H1 (cell line): ENCODE measurements at regions of chr6 and their contacts with region 1.

Region 1: DNA sequence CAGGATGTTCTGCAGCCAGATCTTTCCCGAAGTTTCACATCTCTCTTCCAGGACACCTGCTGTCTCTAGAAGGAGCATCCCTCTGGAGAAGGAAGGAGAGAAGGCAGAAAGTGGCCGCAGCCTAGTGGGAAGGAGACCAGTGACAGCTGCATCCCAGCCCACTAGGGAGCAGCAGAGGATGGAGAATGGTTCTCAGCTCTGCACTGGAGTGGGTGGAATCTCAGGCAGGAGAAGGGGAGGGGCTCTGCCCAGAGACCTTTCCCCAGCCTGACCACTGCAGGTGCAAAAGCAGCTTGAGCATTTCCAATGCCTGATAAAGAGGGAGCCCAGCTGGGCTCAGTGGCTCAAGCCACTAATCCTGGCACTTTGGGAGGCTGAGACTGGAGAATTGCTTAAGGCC is 32.3 kb downstream of the NCR2 start:
- DNase-seq: peak in 1 of 2 experiments; percentile 79
- H3K4me3 ChIP-seq: no peak overlapping the region
- H3K27ac ChIP-seq: no peak overlapping the region
- H3K4me1 ChIP-seq: peaks cover 3 to 22% (median 11%) of the 10 kb centered on the region in 4 experiments
- H3K27me3 ChIP-seq: peaks cover 31 to 38% (median 38%) of the 10 kb centered on the region in 4 experiments
- CTCF ChIP-seq: peak in 2 of 3 experiments; percentile 97; a peak in 3 of 4 replicates
- EP300 ChIP-seq: no peak
- POLR2A ChIP-seq: no peak
- RAD21 ChIP-seq: peak; percentile 98 to 99

Region 2: GRCh38 chr6:41356790-41357189 is 10.9 kb before region 1 on chr6:
- CTCF ChIA-PET with region 1: interaction called, 12 read pairs
- POLR2A ChIA-PET with region 1: no interaction called
- DNase-seq: peak in 1 of 2 experiments; percentile 30
- H3K4me3 ChIP-seq: no peak overlapping the region
- H3K27ac ChIP-seq: no peak overlapping the region
- H3K4me1 ChIP-seq: no peaks in the 10 kb centered on the region; a peak in 2 of 7 replicates
- H3K27me3 ChIP-seq: no peaks in the 10 kb centered on the region; a peak in 1 of 7 replicates
- CTCF ChIP-seq: peak in 1 of 3 experiments; percentile 7; a peak in 1 of 4 replicates
- EP300 ChIP-seq: no peak
- POLR2A ChIP-seq: no peak
- RAD21 ChIP-seq: no peak

Region 3: DNA sequence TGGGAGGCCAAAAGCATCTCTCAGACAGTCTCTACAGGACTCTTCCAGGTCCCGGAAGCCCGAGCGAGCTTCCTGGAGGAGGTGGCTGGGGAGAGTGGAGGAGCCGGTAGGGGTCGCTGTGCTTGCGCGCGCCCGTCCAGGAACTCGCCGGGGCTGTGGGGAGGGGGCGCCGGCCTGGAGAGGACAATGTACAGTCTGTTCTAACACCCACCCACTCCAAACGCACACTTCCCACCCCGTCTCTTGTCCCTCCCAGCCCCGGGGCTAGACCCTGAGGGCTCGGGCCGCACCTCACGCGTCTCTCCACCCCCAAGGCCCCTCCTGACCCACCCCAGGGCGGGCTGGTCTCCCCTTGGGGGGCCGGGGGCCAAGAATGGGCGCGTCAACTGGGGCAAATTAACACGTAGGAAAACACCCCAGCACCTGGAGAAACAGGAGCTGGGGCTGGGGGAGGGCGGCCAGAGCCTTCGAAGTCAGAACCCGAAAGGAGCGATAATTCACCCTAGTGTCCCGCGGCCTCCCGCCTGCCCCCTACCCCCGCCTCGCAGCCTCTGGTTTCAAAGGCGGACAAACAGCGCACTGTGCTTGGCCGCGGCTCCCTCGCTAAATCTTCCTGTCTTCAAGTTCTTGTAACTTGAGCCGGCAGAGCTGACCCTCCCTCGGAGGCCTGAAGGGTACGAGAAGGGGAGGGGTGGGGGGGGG is 75.3 kb after region 1 on chr6:
- CTCF ChIA-PET with region 1: interaction called, 26 read pairs
- POLR2A ChIA-PET with region 1: interaction called, 6 read pairs
- DNase-seq: peak; percentile 71 to 93
- H3K4me3 ChIP-seq: peak overlapping the region; percentile 43 to 76 (median 51)
- H3K27ac ChIP-seq: peak overlapping the region; percentile 10; the same call in 1 of the 2 replicates
- H3K4me1 ChIP-seq: peaks cover 10 to 24% (median 14%) of the 10 kb centered on the region in 4 experiments
- H3K27me3 ChIP-seq: peaks cover 1 to 21% (median 13%) of the 10 kb centered on the region in 4 experiments
- CTCF ChIP-seq: peak; percentile 80 to 87 (median 83)
- EP300 ChIP-seq: no peak
- POLR2A ChIP-seq: no peak; a peak in 1 of 3 replicates
- RAD21 ChIP-seq: peak; percentile 67 to 78

Region 4: DNA sequence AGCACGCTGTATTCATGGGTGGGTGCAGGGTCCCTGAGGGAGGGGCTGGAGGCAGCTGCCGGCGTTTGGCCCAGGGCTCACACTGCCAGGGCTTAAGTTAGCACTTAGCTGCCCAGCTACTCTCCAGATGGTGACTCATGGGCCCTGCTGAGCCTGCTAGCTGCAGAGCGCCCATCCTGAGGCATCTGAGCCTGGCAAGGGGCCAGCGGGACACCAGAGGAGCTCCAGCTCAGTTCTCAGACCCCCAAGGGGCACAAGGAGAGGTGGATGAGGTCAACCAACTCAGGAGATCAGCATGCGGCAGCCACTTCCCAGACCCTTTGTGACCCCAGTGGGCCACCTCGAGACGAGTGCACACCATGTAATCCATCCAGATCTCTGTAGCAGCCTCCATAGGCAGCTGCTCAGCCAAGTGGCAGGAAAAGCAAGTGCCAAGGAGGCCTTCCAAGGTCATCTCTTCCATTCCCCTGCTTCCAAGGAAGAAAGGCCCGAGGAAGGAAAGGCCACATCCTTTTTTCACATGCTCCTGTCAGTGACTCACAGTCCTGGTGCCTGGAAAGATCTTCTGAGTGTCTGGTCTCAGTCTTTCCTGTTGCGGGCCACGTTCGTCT is 213.8 kb after region 1 on chr6:
- CTCF ChIA-PET with region 1: interaction called, 28 read pairs
- POLR2A ChIA-PET with region 1: no interaction called
- DNase-seq: no peak
- H3K4me3 ChIP-seq: no peak overlapping the region
- H3K27ac ChIP-seq: no peak overlapping the region
- H3K4me1 ChIP-seq: peaks cover 16 to 48% (median 36%) of the 10 kb centered on the region in 4 experiments
- H3K27me3 ChIP-seq: no peaks in the 10 kb centered on the region
- CTCF ChIP-seq: no peak
- EP300 ChIP-seq: no peak
- POLR2A ChIP-seq: no peak
- RAD21 ChIP-seq: no peak

Region 5: DNA sequence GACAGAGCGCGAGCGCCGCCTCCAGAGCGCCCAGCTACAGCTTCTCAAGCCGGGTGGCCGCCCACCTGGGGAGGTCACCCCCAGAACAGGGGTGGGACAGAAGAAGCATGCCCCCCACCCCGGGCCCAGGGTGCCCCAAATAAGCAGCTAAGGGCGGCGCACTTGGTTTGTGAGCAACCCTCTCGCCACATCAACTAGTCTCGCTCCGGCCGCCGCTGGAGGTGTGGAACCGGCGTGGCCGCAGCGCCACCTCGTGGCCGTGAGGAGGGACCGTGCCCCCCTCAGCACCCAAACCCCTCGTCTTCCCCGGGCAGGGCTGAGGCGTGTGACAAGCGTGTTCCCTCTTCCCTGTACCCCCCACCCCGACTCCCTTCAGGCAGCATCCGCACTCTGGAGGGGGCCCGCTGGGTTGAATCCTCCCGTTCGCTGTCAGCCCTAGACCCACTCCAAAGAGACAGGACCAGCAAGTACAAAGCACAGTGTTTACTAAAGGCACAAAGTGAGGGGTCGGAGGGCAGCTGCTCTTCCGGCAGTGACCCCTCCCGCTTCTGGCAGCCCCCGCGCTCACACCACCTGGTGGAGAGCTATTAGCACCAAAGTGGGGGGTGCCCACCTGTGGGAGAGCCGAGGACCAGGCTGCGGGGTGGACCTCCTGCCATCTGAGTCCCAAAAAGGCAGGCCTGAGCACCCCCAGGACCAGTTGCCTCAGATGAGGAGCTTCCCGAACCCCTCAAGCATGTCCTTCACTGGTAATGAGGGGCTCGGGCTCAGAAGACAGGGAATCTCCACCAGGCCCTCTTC is 316.0 kb after region 1 on chr6:
- CTCF ChIA-PET with region 1: interaction called, 142 read pairs
- POLR2A ChIA-PET with region 1: interaction called, 5 read pairs
- DNase-seq: peak in 1 of 2 experiments; percentile 91
- H3K4me3 ChIP-seq: peak overlapping the region in 3 of 4 experiments; percentile 11 to 57 (median 29); a peak in 5 of 8 replicates
- H3K27ac ChIP-seq: no peak overlapping the region
- H3K4me1 ChIP-seq: peaks cover 5 to 41% (median 18%) of the 10 kb centered on the region in 4 experiments
- H3K27me3 ChIP-seq: peaks cover 0 to 12% (median 5%) of the 10 kb centered on the region in 4 experiments; a peak in 4 of 7 replicates
- CTCF ChIP-seq: peak in 2 of 3 experiments; percentile 95; a peak in 3 of 4 replicates
- EP300 ChIP-seq: no peak
- POLR2A ChIP-seq: no peak
- RAD21 ChIP-seq: peak; percentile 92

Region 6: DNA sequence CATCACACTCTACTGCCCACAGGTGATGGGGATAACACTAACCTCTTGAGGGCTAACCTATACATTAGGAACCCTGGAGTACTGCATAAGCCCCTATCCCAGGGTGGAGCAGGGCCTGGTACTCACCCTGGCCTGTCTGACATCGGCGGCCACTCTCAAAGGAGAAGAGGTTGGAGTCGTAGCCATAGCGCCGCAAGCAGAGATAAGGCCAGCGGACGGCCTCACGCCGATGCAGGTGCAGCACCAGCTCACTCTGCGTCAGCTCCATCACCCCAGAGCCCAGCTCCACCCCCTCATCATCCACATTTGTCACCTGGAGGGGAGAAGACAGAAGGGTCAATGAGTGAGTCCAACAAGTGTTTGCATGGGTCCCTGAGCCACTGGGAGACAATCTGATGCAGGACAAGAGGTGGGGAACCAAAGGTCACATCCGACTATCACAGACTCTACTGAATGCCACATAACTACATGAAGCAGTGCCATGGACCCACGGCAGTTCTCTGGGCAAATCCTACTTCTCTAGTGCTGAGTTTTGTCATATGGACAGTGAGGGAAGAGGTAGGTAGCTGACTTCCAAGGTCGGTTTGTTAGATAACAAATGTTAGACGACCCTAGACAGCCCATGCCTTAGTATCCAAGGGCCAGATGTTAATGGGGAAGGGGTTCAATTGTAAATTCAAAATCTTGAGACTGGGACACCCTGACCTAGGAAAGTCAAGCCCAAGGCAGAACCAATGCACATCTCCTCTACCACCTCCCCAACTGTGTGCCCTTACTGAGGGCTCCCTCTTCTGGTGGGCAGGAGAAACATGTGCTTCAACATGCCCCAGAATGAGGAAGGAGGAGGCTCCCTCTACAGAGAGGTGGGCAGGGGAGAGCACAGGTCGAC is 407.8 kb after region 1 on chr6:
- CTCF ChIA-PET with region 1: interaction called, 12 read pairs
- POLR2A ChIA-PET with region 1: no interaction called
- DNase-seq: peak; percentile 38 to 57
- H3K4me3 ChIP-seq: no peak overlapping the region
- H3K27ac ChIP-seq: no peak overlapping the region
- H3K4me1 ChIP-seq: peaks cover 0 to 5% (median 3%) of the 10 kb centered on the region in 4 experiments; a peak in 1 of 7 replicates
- H3K27me3 ChIP-seq: no peaks in the 10 kb centered on the region; a peak in 1 of 7 replicates
- CTCF ChIP-seq: peak; percentile 96 to 98 (median 98)
- EP300 ChIP-seq: no peak
- POLR2A ChIP-seq: no peak
- RAD21 ChIP-seq: peak; percentile 87 to 92